Activated CD8-positive, alpha-beta T cell treated with anti-CD3 and anti-CD28 coated beads for 36 hours (primary cell): ENCODE measurements at regions of chr10 and their contacts with region 1.

Region 1: GRCh38 chr10:13659897-13660550 is 73.3 kb downstream of the PRPF18 start:
- DNase-seq: peak; percentile 72
- ATAC-seq: peak; percentile 74
- H3K4me3 Mint-ChIP-seq: peak overlapping the region; percentile 26
- H3K27ac Mint-ChIP-seq: peak overlapping the region; percentile 63
- H3K4me1 Mint-ChIP-seq: peaks cover 14% of the 10 kb centered on the region
- H3K27me3 Mint-ChIP-seq: no peaks in the 10 kb centered on the region
- CTCF ChIP-seq: peak; percentile 92

Region 2: GRCh38 chr10:13642293-13642692 is 17.7 kb before region 1 on chr10:
- CTCF ChIA-PET with region 1: interaction called, 16 read pairs
- POLR2A ChIA-PET with region 1: interaction called, 3 read pairs
- intact Hi-C with region 1: no loop called
- DNase-seq: no peak
- ATAC-seq: no peak
- H3K4me3 Mint-ChIP-seq: no peak overlapping the region
- H3K27ac Mint-ChIP-seq: no peak overlapping the region
- H3K4me1 Mint-ChIP-seq: no peaks in the 10 kb centered on the region
- H3K27me3 Mint-ChIP-seq: no peaks in the 10 kb centered on the region
- CTCF ChIP-seq: no peak

Region 3: GRCh38 chr10:13690281-13690825 is 30.3 kb after region 1 on chr10:
- CTCF ChIA-PET with region 1: no interaction called
- POLR2A ChIA-PET with region 1: no interaction called
- intact Hi-C with region 1: no loop called
- DNase-seq: peak; percentile 11
- ATAC-seq: peak; percentile 37
- H3K4me3 Mint-ChIP-seq: no peak overlapping the region
- H3K27ac Mint-ChIP-seq: no peak overlapping the region
- H3K4me1 Mint-ChIP-seq: no peaks in the 10 kb centered on the region
- H3K27me3 Mint-ChIP-seq: no peaks in the 10 kb centered on the region
- CTCF ChIP-seq: no peak

Region 4: DNA sequence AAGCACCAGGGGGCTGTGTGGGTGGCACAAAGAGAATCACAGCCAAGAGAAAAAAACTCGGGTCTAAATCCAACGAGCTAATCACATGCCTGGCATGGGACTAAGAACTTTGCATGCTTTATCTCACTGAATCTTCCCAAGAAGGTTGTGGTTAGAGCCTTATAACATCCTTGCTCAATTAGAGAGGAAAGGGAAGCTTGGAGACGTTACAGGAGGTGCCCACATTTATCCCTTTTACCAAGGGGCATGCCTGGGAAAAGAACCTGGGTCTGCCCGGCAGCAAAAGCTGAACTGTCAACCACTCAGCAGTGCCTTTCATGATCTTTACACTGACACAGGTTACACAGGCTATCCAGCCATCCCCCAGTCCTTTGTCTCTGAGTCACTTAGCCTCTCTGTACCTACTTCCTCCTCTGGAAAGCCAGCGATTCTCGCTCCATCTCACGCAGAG is 116.9 kb after region 1 on chr10:
- CTCF ChIA-PET with region 1: interaction called, 15 read pairs
- POLR2A ChIA-PET with region 1: interaction called, 3 read pairs
- intact Hi-C with region 1: loop called (anchors 1 kb)
- DNase-seq: no peak
- ATAC-seq: no peak
- H3K4me3 Mint-ChIP-seq: no peak overlapping the region
- H3K27ac Mint-ChIP-seq: no peak overlapping the region
- H3K4me1 Mint-ChIP-seq: no peaks in the 10 kb centered on the region
- H3K27me3 Mint-ChIP-seq: peaks cover 3% of the 10 kb centered on the region
- CTCF ChIP-seq: no peak